HCT116 (cell line): ENCODE measurements at regions of chr10 and their contacts with region 1.

Region 1: DNA sequence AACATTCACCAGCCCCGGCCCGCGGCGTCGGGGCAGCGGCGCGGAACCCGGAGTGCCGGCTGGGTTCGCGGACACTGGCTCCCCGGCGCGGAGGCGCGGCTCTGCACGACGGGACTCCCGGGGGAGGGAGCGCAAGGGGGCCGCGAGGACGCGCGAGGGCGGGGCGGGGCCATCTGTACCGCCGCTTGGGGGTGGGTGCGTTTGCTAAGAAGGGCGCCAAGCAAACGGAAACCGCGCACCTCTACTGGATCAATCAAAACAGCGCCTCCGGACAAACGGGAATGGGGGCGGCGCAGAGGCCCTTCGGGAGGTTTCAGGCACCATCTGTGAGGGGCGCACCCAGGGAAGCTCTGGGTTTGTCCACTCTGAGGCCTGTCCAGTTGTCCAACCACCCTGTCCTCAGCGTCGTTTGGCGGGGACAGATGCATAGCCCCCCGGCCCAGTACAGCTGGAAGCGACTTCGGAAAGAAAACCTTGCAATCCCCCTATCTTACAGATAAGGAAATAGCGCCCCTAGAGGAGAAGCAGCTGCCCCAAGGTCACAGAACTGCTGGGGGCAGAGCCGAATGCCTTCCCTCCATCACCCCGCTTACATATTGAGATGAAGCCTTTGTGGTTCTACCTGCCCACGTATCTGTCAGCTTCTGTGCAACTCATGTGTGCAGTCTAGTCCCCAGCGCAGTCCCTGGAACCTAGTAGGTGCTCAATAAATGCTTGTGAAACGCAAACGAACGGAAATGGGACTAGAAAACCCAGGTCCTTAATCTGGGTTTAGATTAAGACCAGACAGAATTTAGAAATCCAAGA is 10.7 kb upstream of the SLIT1 start:
- DNase-seq: peak; percentile 45
- ATAC-seq: peak; percentile 90
- H3K4me3 ChIP-seq: peak overlapping the region; percentile 29 to 58
- H3K27ac ChIP-seq: peak overlapping the region; percentile 21; the same call in 1 of the 2 replicates
- H3K4me1 ChIP-seq: peaks cover 3 to 6% of the 10 kb centered on the region in 2 experiments; a peak in 1 of 4 replicates
- H3K27me3 ChIP-seq: no peaks in the 10 kb centered on the region; the same call in 1 of the 2 replicates
- CTCF ChIP-seq: peak; percentile 65 to 87 (median 84); a peak in 5 of 6 replicates
- POLR2A ChIP-seq: no peak
- RAD21 ChIP-seq: peak; percentile 52; the same call in 1 of the 2 replicates

Region 2: DNA sequence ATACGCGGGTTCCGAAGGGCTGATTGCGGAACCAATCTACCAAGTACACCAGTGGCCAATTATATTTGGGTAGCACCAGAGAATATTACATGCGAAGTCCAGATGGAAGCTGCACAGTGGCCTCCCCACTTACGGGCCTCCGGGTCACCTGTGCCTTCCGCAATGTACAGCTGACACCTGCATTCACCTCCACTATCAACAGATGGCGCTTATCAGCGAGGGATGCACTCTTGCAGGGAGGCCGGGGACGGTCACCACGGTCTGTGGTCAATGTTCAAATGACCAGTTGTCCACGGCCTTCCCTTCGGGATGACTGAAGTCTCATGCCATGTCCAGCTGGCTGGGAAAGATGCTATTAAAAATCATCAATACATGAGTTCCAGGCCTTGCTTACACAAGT is 58.3 kb before region 1 on chr10:
- CTCF ChIA-PET with region 1: interaction called, 3 read pairs
- POLR2A ChIA-PET with region 1: no interaction called
- RAD21 ChIA-PET with region 1: no interaction called
- intact Hi-C with region 1: loop called (anchors 2 kb)
- DNase-seq: peak; percentile 31
- ATAC-seq: peak; percentile 99
- H3K4me3 ChIP-seq: no peak overlapping the region
- H3K27ac ChIP-seq: no peak overlapping the region
- H3K4me1 ChIP-seq: peaks cover 3 to 9% of the 10 kb centered on the region in 2 experiments; a peak in 1 of 4 replicates
- H3K27me3 ChIP-seq: peaks cover 6% of the 10 kb centered on the region; the same call in 1 of the 2 replicates
- CTCF ChIP-seq: peak; percentile 68 to 71 (median 70); a peak in 5 of 6 replicates
- POLR2A ChIP-seq: no peak
- RAD21 ChIP-seq: peak; percentile 67

Region 3: DNA sequence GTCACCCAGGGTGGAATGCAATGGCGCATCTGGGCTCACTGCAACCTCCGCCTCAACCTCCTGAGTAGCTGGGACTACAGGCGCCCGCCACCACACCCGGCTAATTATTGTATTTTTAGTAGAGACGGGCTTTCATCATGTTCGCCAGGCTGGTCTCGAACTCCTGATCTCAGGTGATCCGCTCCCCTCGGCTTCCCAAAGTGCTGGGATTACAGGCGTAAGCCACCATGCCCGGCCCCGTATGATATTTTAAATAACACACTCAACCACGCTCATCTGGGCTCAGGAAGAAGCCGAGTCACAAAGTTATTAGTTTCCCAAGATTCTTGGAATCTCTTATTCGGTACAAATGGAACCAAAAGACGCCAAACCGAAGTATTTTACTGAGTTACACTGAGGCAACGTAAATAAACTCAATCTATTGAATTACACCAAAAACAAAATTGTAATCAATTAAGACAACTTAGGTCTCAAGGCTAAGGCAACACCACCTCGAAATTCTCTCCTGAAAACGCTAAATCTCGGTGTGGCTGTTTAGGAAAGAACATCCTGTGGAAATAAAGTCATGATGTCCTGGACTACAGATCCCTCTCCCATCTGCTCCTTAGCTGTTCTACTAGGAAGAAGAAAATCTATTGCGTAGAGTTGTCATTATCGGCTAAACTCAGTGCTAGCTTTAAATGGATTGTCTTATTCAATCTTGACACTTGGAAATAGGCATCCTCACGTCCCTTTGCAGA is 95.1 kb after region 1 on chr10:
- CTCF ChIA-PET with region 1: no interaction called
- POLR2A ChIA-PET with region 1: no interaction called
- RAD21 ChIA-PET with region 1: no interaction called
- intact Hi-C with region 1: no loop called
- DNase-seq: no peak
- ATAC-seq: peak; percentile 2; the same call in 1 of the 2 replicates
- H3K4me3 ChIP-seq: peak overlapping the region; percentile 70 to 74
- H3K27ac ChIP-seq: peak overlapping the region; percentile 92
- H3K4me1 ChIP-seq: peaks cover 3 to 11% of the 10 kb centered on the region in 2 experiments; a peak in 2 of 4 replicates
- H3K27me3 ChIP-seq: no peaks in the 10 kb centered on the region
- CTCF ChIP-seq: no peak
- POLR2A ChIP-seq: no peak
- RAD21 ChIP-seq: no peak

Region 4: GRCh38 chr10:97425964-97426775 is 229.7 kb after region 1 on chr10 and contains the start of gene PGAM1:
- CTCF ChIA-PET with region 1: no interaction called
- POLR2A ChIA-PET with region 1: no interaction called
- RAD21 ChIA-PET with region 1: no interaction called
- intact Hi-C with region 1: no loop called
- DNase-seq: peak; percentile 92
- ATAC-seq: peak; percentile 89
- H3K4me3 ChIP-seq: peak within 1 kb of the TSS; percentile 87 to 98
- H3K27ac ChIP-seq: peak within 1 kb of the TSS; percentile 96
- H3K4me1 ChIP-seq: peaks cover 8 to 32% of the 10 kb centered on the region in 2 experiments
- H3K27me3 ChIP-seq: no peaks in the 10 kb centered on the region
- CTCF ChIP-seq: peak in 2 of 3 experiments; percentile 45 to 69; a peak in 4 of 6 replicates
- POLR2A ChIP-seq: peak; percentile 47
- RAD21 ChIP-seq: no peak
- total RNA-seq, gene PGAM1: 497 TPM